ENCODE measurements at regions of chr18 and their contacts with region 1.

Region 1: GRCh38 chr18:3261371-3262246 is at the start of gene MYL12B:
- DNase-seq: peak; percentile 83 to 91 (median 86)
- H3K4me3 ChIP-seq: peak within 1 kb of the TSS; percentile 89 to 94
- H3K4me3 Mint-ChIP-seq: peak within 1 kb of the TSS; percentile 94 to 100 (median 98)
- H3K27ac ChIP-seq: peak within 1 kb of the TSS; percentile 90
- H3K27ac Mint-ChIP-seq: peak within 1 kb of the TSS; percentile 98 to 100 (median 99)
- H3K4me1 ChIP-seq: peaks cover 81% of the 10 kb centered on the region
- H3K4me1 Mint-ChIP-seq: peaks cover 57 to 92% (median 70%) of the 10 kb centered on the region in 4 donors
- H3K27me3 ChIP-seq: no peaks in the 10 kb centered on the region
- H3K27me3 Mint-ChIP-seq: no peaks in the 10 kb centered on the region
- total RNA-seq, gene MYL12B: 199 to 219 TPM

Region 2: GRCh38 chr18:2971741-2972552 is 289.7 kb before region 1 on chr18:
- CTCF ChIA-PET with region 1: no interaction called
- POLR2A ChIA-PET with region 1: no interaction called
- intact Hi-C with region 1: no loop called
- DNase-seq: peak; percentile 66 to 91 (median 72)
- H3K4me3 ChIP-seq: peak overlapping the region; percentile 34 to 37
- H3K4me3 Mint-ChIP-seq: peak overlapping the region; percentile 82 to 94 (median 88)
- H3K27ac ChIP-seq: peak overlapping the region; percentile 79
- H3K27ac Mint-ChIP-seq: peak overlapping the region; percentile 88 to 98 (median 96)
- H3K4me1 ChIP-seq: peaks cover 100% of the 10 kb centered on the region
- H3K4me1 Mint-ChIP-seq: peaks cover 72 to 96% (median 86%) of the 10 kb centered on the region in 4 donors
- H3K27me3 ChIP-seq: no peaks in the 10 kb centered on the region
- H3K27me3 Mint-ChIP-seq: no peaks in the 10 kb centered on the region

Region 3: GRCh38 chr18:3012964-3013804 is 248.4 kb before region 1 on chr18 and contains the start of gene LPIN2:
- CTCF ChIA-PET with region 1: no interaction called
- POLR2A ChIA-PET with region 1: interaction called, 6 read pairs
- intact Hi-C with region 1: loop called (anchors 5 kb)
- DNase-seq: peak; percentile 97 to 98 (median 98)
- H3K4me3 ChIP-seq: peak within 1 kb of the TSS; percentile 55 to 70
- H3K4me3 Mint-ChIP-seq: peak within 1 kb of the TSS; percentile 93 to 99 (median 96)
- H3K27ac ChIP-seq: peak within 1 kb of the TSS; percentile 63
- H3K27ac Mint-ChIP-seq: peak within 1 kb of the TSS; percentile 94 to 98 (median 98)
- H3K4me1 ChIP-seq: peaks cover 68% of the 10 kb centered on the region
- H3K4me1 Mint-ChIP-seq: peaks cover 51 to 75% (median 68%) of the 10 kb centered on the region in 4 donors
- H3K27me3 ChIP-seq: no peaks in the 10 kb centered on the region
- H3K27me3 Mint-ChIP-seq: no peaks in the 10 kb centered on the region
- total RNA-seq, gene LPIN2: 95.4 to 103 TPM

Region 4: GRCh38 chr18:3604498-3605408 is 343.1 kb after region 1 on chr18:
- CTCF ChIA-PET with region 1: no interaction called
- POLR2A ChIA-PET with region 1: interaction called, 7 read pairs
- intact Hi-C with region 1: loop called (anchors 5 kb)
- DNase-seq: peak; percentile 43 to 63 (median 56)
- H3K4me3 ChIP-seq: peak overlapping the region; percentile 44 to 54
- H3K4me3 Mint-ChIP-seq: no peak overlapping the region
- H3K27ac ChIP-seq: peak overlapping the region; percentile 67
- H3K27ac Mint-ChIP-seq: no peak overlapping the region
- H3K4me1 ChIP-seq: peaks cover 58% of the 10 kb centered on the region
- H3K4me1 Mint-ChIP-seq: peaks cover 8 to 15% (median 11%) of the 10 kb centered on the region in 4 donors
- H3K27me3 ChIP-seq: no peaks in the 10 kb centered on the region
- H3K27me3 Mint-ChIP-seq: no peaks in the 10 kb centered on the region